ENCODE measurements at regions of chr3 and their contacts with region 1.

Region 1: DNA sequence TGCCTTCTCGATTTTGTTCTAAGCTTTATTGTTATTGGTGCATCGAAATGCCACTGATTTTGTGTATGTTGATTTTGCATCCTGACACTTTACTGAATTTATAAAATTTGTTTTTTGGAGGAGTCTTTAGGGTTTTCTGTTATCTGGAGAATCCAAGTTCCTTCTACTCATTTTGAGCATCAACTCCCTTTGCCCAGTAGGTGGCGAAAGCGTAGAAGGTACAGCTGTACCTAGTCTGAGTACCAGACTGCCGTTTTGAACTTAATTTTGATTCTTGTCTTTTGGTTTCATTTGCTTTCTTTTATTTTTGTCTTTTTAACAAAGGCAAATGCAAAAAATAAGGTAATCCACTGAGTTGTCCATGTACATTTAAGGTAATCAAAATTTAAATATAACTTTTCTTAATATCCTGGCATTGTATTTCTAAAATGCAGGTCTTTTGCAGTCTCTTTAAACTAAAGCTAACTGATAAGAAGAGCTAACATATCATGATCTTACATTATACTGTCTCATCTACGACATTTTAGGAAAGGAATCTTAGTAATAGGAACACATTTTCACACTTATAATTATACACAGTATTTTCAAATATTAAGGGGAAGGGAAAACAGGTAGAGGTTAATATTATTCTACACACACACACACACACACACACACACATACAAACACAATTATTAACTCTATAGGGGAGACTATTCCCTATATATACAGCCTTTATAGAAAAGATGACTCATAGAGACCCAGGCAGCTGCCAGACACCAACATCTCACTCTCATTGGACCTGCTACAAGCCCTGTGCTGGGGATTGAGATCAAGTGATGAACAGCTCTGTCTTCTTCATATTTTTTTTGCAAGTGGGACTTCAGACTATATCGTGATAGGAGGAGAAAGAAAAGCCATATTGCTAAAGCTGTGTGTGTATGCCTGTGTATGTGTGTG is 71.7 kb downstream of the SYNPR start:
- DNase-seq: peak in 2 of 3 donors; percentile 41 to 58
- ATAC-seq: peak; percentile 79 to 83 (median 80)
- H3K4me3 ChIP-seq: no peak overlapping the region
- H3K27ac ChIP-seq: no peak overlapping the region
- H3K4me1 ChIP-seq: no peaks in the 10 kb centered on the region
- H3K27me3 ChIP-seq: peaks cover 0 to 3% of the 10 kb centered on the region in 2 donors
- CTCF ChIP-seq: peak; percentile 59 to 85 (median 79)
- POLR2A ChIP-seq: no peak

Region 2: DNA sequence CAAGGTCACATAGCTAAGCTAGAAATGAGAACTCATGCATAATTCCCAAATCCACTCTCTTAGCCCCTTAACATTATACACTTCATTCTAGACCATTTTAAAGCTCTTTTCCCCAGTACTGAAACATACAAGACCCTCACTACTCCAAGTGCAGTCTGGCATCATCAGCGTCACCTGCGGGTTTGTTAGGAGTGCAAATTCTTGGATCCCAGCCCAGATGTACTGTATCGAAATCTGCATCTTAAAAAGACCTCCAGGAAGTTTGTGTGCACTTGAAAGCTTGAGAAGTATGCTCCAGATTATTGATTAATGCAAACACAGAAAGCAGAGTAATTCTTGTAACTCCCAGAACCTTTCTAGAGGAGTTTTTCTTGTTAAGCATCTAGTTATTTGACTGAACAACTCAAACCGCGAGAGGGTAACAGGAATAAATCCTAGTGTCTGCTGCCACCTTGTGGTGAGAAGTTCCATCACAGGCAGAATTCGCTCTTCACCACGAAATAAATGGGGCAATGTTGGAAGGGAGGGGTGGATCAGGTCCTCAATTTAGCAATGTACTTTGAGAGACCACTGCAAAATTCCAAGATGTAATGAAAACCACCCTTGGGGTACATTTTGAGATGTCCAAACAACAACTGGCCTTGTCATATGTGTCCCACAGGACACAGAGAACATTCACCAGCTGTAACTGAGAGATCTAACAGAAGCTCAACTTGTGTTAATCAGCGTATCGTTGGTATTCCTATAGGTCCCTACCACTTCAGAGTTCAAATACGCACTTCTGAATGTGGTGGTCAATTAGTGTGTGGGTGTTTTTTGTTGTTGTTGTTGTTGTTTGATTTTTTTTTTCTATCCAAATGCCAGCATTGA is 468.7 kb after region 1 on chr3:
- intact Hi-C with region 1: loop called (anchors 5 to 10 kb)
- DNase-seq: peak in 2 of 3 donors; percentile 23 to 56
- ATAC-seq: peak; percentile 76 to 91 (median 88)
- H3K4me3 ChIP-seq: no peak overlapping the region
- H3K27ac ChIP-seq: no peak overlapping the region
- H3K4me1 ChIP-seq: no peaks in the 10 kb centered on the region
- H3K27me3 ChIP-seq: no peaks in the 10 kb centered on the region
- CTCF ChIP-seq: peak; percentile 85 to 91 (median 89)
- POLR2A ChIP-seq: no peak

Measured in right lobe of liver (tissue), 6 donors.